Calu3 (cell line): ENCODE measurements at regions of chr12 and their contacts with region 1.

Region 1: GRCh38 chr12:11238275-11238674 is 31.2 kb downstream of the PRB3 start:
- DNase-seq: no peak
- H3K4me3 Mint-ChIP-seq: no peak overlapping the region
- H3K27ac Mint-ChIP-seq: no peak overlapping the region
- H3K4me1 Mint-ChIP-seq: no peaks in the 10 kb centered on the region
- H3K27me3 Mint-ChIP-seq: peaks cover 50% of the 10 kb centered on the region
- CTCF ChIP-seq: no peak

Region 2: DNA sequence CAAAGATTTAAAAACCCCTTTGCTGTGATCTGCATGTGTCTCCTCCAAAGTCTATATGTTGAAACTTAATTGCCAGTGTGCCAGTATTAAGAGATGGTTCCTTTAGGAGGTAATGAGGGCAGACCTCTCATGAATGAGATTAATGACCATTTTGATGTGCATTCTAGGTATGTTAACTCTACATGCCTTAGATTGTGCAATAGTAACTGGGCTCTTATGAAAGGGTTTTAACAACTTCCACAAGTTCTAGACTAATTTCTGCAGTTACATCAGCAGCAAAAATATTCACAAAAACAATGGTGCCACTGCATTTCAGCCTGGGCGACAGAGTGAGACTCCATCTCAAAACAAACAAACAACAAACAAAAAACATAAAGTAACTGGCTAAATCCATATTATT is 408.3 kb before region 1 on chr12:
- CTCF ChIA-PET with region 1: no interaction called
- intact Hi-C with region 1: no loop called
- DNase-seq: no peak
- H3K4me3 Mint-ChIP-seq: no peak overlapping the region
- H3K27ac Mint-ChIP-seq: no peak overlapping the region
- H3K4me1 Mint-ChIP-seq: no peaks in the 10 kb centered on the region
- H3K27me3 Mint-ChIP-seq: no peaks in the 10 kb centered on the region
- CTCF ChIP-seq: no peak

Region 3: GRCh38 chr12:11150832-11151231 is 87.4 kb before region 1 on chr12:
- CTCF ChIA-PET with region 1: no interaction called
- intact Hi-C with region 1: no loop called
- DNase-seq: no peak
- H3K4me3 Mint-ChIP-seq: no peak overlapping the region
- H3K27ac Mint-ChIP-seq: no peak overlapping the region
- H3K4me1 Mint-ChIP-seq: no peaks in the 10 kb centered on the region
- H3K27me3 Mint-ChIP-seq: no peaks in the 10 kb centered on the region
- CTCF ChIP-seq: no peak

Region 4: GRCh38 chr12:12046401-12046800 is 808.1 kb after region 1 on chr12:
- CTCF ChIA-PET with region 1: no interaction called
- intact Hi-C with region 1: loop called (anchors 10 kb)
- DNase-seq: no peak
- H3K4me3 Mint-ChIP-seq: no peak overlapping the region
- H3K27ac Mint-ChIP-seq: no peak overlapping the region
- H3K4me1 Mint-ChIP-seq: no peaks in the 10 kb centered on the region
- H3K27me3 Mint-ChIP-seq: no peaks in the 10 kb centered on the region
- CTCF ChIP-seq: no peak